B cell (primary cell): ENCODE measurements at regions of chr21 and their contacts with region 1.

Region 1: DNA sequence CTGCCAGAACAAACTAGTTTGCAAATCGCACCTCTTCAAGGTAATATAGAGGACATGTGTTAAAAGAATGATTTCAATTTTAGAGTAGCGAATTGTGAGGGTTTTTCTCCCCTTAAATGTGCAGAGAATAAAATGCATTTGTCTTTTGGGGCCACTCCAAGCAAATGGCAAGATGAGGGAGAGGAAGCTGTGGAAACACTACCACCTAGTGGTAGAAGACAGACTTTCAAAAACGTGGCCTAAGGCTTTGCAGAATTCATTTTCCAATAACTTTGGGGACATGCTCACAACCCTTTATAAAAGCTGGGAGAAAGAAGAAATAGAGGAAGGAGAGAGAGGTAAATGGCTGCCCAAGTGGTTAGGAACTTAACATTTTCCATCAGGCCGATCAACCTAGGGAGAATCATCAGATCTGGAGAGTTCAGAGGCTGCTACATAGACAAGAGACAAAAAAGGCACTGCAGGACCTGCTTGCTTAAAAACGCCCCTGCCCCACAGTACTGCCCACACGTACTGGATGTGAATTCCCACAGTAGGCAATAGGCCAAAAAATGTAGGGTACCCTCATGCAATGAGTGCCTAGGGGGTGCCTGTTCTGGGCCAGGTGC is 15.7 kb upstream of the RCAN1 start:
- DNase-seq: peak; percentile 69
- ATAC-seq: peak; percentile 63
- H3K4me3 ChIP-seq: no peak overlapping the region
- H3K4me3 Mint-ChIP-seq: no peak overlapping the region
- H3K27ac ChIP-seq: no peak overlapping the region
- H3K27ac Mint-ChIP-seq: no peak overlapping the region
- H3K4me1 ChIP-seq: no peaks in the 10 kb centered on the region
- H3K4me1 Mint-ChIP-seq: no peaks in the 10 kb centered on the region
- H3K27me3 ChIP-seq: peaks cover 0 to 3% (median under 1%) of the 10 kb centered on the region in 4 experiments
- H3K27me3 Mint-ChIP-seq: peaks cover 16% of the 10 kb centered on the region
- CTCF ChIP-seq: peak; percentile 93

Region 2: DNA sequence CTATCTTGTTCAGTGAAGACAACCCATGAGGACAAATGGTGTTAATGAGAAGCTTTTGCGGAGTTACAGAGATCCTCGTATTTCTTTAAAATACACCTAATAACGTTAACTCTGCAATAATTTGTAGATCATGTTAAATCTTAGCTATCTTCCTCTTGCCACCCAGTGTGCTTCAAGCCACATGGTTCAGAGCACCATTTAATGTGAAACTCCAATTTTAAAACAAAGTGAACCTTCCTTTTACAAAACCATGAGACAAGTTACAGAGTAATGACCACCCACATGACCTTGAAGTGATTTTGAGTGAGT is 268.6 kb before region 1 on chr21:
- CTCF ChIA-PET with region 1: interaction called, 51 read pairs
- POLR2A ChIA-PET with region 1: no interaction called
- intact Hi-C with region 1: loop called (anchors 1 kb)
- DNase-seq: no peak
- ATAC-seq: no peak
- H3K4me3 ChIP-seq: no peak overlapping the region
- H3K4me3 Mint-ChIP-seq: no peak overlapping the region
- H3K27ac ChIP-seq: no peak overlapping the region
- H3K27ac Mint-ChIP-seq: no peak overlapping the region
- H3K4me1 ChIP-seq: peaks cover 4% of the 10 kb centered on the region in 2 donors
- H3K4me1 Mint-ChIP-seq: peaks cover 6% of the 10 kb centered on the region
- H3K27me3 ChIP-seq: peaks cover 0 to 2% (median 0%) of the 10 kb centered on the region in 4 experiments
- H3K27me3 Mint-ChIP-seq: peaks cover 30% of the 10 kb centered on the region
- CTCF ChIP-seq: peak; percentile 43

Region 3: GRCh38 chr21:34367321-34367935 is 263.2 kb before region 1 on chr21:
- CTCF ChIA-PET with region 1: interaction called, 51 read pairs
- POLR2A ChIA-PET with region 1: no interaction called
- intact Hi-C with region 1: loop called (anchors 1 kb)
- DNase-seq: peak; percentile 58
- ATAC-seq: peak; percentile 70
- H3K4me3 ChIP-seq: no peak overlapping the region
- H3K4me3 Mint-ChIP-seq: no peak overlapping the region
- H3K27ac ChIP-seq: no peak overlapping the region
- H3K27ac Mint-ChIP-seq: no peak overlapping the region
- H3K4me1 ChIP-seq: no peaks in the 10 kb centered on the region
- H3K4me1 Mint-ChIP-seq: no peaks in the 10 kb centered on the region
- H3K27me3 ChIP-seq: peaks cover 0 to 3% (median 0%) of the 10 kb centered on the region in 4 experiments
- H3K27me3 Mint-ChIP-seq: peaks cover 20% of the 10 kb centered on the region
- CTCF ChIP-seq: peak; percentile 78

Region 4: GRCh38 chr21:34609244-34609932 is 21.3 kb before region 1 on chr21:
- CTCF ChIA-PET with region 1: interaction called, 22 read pairs
- POLR2A ChIA-PET with region 1: no interaction called
- intact Hi-C with region 1: no loop called
- DNase-seq: no peak
- ATAC-seq: no peak
- H3K4me3 ChIP-seq: no peak overlapping the region
- H3K4me3 Mint-ChIP-seq: no peak overlapping the region
- H3K27ac ChIP-seq: no peak overlapping the region
- H3K27ac Mint-ChIP-seq: no peak overlapping the region
- H3K4me1 ChIP-seq: peaks cover 6 to 9% of the 10 kb centered on the region in 2 donors
- H3K4me1 Mint-ChIP-seq: peaks cover 12% of the 10 kb centered on the region
- H3K27me3 ChIP-seq: peaks cover 0 to 7% (median 0%) of the 10 kb centered on the region in 4 experiments
- H3K27me3 Mint-ChIP-seq: peaks cover 12% of the 10 kb centered on the region
- CTCF ChIP-seq: no peak

Region 5: DNA sequence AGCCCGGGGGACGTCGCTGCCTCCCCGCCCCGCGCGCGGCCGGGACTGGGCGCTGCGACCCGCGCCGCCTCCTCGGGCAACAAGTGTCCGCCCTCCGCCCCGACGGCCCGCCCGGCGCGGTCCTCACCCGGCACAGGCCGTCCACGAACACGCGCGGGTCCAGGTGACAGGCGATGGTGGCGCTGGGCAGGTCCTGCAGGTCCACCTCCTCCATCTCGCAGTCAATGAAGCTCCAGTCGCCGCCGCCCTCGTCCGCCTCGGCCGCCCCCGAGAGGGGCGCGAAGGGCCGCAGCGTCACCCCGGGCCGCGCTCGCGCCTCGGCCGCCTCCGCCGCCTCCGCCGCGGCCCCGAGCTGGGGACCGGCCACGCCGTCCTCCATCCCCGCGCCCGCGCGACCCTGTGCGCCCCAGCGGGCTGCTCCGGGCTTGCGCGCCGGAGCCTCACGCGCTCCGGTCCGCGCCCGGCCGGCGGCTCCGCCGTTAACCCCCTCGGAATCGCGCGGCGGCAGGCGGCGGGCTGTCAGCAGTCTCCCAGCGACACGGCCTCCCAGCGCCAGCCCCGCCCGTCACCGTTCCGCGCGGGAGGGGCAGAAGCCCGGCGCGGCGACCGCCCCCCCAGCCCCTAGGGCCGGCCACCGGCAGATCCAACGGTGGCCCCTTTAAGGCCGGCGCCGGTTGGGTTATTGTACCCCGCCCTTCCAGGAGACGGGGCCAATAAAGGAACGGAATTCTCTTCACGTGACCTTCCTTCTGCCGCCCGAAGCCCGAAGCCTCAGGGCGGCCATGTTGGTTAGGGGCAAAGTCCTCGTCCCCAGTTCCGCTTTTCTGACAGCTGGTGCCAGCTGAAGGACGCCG is 15.8 kb before region 1 on chr21 and contains the start of gene RCAN1:
- CTCF ChIA-PET with region 1: interaction called, 22 read pairs
- POLR2A ChIA-PET with region 1: no interaction called
- intact Hi-C with region 1: loop called (anchors 1 kb)
- DNase-seq: peak; percentile 94
- ATAC-seq: peak; percentile 95
- H3K4me3 ChIP-seq: peak within 1 kb of the TSS; percentile 41 to 74 (median 59)
- H3K4me3 Mint-ChIP-seq: peak within 1 kb of the TSS; percentile 91
- H3K27ac ChIP-seq: peak within 1 kb of the TSS in 1 of 2 donors; percentile 71
- H3K27ac Mint-ChIP-seq: peak within 1 kb of the TSS; percentile 84
- H3K4me1 ChIP-seq: peaks cover 9 to 11% of the 10 kb centered on the region in 2 donors
- H3K4me1 Mint-ChIP-seq: peaks cover 16% of the 10 kb centered on the region
- H3K27me3 ChIP-seq: peaks cover 0 to 7% (median 0%) of the 10 kb centered on the region in 4 experiments
- H3K27me3 Mint-ChIP-seq: peaks cover 15% of the 10 kb centered on the region
- CTCF ChIP-seq: no peak
- total RNA-seq, gene RCAN1: 4.2 and 4.4 TPM in 2 replicates

Region 6: DNA sequence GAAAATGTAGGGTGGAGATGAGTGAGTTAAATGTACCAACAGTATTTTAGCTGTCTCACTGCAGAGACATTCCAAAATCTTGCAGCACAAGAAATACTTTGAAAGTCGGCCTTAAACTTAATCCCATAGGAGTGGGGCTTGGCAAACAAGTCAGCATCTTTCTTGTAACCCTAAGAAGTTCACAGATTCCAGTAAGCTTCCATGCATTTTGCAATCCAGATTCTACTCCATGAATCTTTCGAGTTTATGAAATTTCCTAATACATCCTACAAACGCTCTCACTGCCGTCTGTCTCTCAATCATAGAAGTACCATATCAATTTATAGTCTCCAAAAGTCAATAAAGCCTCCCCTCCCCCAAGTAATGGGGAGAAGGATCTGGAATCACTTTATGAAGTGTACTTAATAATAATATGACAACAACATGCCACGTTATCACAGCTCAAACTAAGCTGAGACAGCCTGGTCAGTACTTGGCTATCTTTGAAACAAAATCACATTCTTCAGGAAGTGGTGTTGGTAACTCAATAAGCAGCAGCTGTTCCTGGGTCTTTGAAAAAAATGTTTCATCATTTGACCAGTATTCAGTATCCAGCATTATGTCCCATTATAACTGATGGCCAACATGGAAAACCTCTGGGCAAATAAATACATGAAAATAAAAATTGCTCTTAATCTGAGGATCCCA is 735.9 kb after region 1 on chr21:
- CTCF ChIA-PET with region 1: no interaction called
- POLR2A ChIA-PET with region 1: no interaction called
- intact Hi-C with region 1: no loop called
- DNase-seq: no peak
- ATAC-seq: no peak
- H3K4me3 ChIP-seq: no peak overlapping the region
- H3K4me3 Mint-ChIP-seq: no peak overlapping the region
- H3K27ac ChIP-seq: no peak overlapping the region
- H3K27ac Mint-ChIP-seq: no peak overlapping the region
- H3K4me1 ChIP-seq: no peaks in the 10 kb centered on the region
- H3K4me1 Mint-ChIP-seq: no peaks in the 10 kb centered on the region
- H3K27me3 ChIP-seq: no peaks in the 10 kb centered on the region
- H3K27me3 Mint-ChIP-seq: peaks cover 3% of the 10 kb centered on the region
- CTCF ChIP-seq: no peak